ENCODE measurements at regions of chr7 and their contacts with region 1.

Region 1: DNA sequence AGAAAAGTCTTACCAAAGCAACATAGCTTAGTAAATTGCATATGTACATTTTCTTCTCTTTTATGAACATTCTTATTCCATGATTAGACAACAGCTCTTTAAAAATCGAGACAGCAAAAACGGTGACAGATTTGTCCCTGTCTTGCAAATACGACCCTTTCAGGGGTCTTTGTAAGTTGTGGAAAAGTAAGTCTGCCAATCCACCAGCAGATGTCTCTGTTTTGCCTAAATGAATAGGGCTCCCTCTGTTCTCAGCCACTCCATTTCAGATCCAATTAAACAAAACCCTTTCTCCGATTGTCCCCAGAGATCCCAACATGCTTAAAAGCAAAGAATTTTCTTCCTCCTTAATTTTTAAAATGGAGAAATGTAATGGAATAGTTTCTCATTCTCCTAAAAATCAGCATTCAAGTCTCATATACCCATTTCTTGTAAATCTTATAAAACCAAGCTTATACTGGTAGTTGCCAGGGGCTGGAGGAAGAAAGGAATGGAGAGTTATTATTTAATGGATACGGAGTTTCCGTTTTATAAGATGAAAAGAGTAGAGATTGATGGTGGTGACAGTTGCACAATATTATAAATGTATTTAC is 61.0 kb upstream of the NFE2L3 start:
- DNase-seq: peak; percentile 15
- H3K4me3 Mint-ChIP-seq: no peak overlapping the region
- H3K27ac Mint-ChIP-seq: no peak overlapping the region
- H3K4me1 Mint-ChIP-seq: peaks cover 19% of the 10 kb centered on the region
- H3K27me3 Mint-ChIP-seq: no peaks in the 10 kb centered on the region

Region 2: DNA sequence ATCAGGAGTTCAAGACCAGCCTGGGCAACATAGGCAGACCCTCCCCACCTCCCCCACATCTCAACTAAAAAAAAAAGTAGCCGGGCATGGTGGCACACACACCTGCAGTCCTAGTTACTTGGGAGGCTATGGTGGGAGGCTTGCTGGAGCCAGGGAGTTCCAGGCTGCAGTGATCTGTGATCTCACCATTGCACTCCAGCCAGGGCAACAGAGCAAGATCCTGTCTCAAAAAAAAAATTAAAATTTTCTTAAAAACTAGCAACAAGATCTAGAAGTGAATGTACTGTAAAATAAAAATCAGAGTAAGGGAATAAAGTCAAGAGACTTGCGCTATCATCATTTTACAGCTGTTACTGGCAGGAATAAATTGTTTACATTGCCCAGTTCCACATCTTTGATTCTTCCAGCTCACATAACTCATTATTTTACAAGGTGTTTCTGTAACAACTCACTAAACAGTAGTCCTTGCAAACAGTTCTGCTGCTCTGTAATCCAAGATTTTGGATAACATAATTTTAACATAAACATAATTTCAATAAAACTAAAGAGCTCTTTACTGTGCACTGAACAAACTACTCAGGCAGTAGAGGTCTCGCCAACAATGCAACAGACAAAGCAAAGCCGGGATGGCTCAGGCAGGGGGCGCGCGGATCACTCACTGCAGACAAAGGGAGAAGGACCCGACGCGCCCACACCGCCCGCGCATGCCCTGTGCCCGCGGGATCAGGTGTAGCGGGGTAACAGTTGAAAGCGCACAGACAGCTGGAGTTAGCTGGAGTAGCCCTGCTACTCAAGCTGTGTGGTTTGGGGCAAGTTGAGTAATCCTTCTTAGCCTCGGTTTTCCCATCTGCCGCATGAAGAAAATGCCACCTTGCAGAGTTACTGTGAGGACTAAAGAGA is 12.3 kb before region 1 on chr7:
- CTCF ChIA-PET with region 1: interaction called, 43 read pairs
- intact Hi-C with region 1: no loop called
- DNase-seq: peak; percentile 89
- H3K4me3 Mint-ChIP-seq: no peak overlapping the region
- H3K27ac Mint-ChIP-seq: no peak overlapping the region
- H3K4me1 Mint-ChIP-seq: peaks cover 3% of the 10 kb centered on the region
- H3K27me3 Mint-ChIP-seq: peaks cover 17% of the 10 kb centered on the region

Region 3: DNA sequence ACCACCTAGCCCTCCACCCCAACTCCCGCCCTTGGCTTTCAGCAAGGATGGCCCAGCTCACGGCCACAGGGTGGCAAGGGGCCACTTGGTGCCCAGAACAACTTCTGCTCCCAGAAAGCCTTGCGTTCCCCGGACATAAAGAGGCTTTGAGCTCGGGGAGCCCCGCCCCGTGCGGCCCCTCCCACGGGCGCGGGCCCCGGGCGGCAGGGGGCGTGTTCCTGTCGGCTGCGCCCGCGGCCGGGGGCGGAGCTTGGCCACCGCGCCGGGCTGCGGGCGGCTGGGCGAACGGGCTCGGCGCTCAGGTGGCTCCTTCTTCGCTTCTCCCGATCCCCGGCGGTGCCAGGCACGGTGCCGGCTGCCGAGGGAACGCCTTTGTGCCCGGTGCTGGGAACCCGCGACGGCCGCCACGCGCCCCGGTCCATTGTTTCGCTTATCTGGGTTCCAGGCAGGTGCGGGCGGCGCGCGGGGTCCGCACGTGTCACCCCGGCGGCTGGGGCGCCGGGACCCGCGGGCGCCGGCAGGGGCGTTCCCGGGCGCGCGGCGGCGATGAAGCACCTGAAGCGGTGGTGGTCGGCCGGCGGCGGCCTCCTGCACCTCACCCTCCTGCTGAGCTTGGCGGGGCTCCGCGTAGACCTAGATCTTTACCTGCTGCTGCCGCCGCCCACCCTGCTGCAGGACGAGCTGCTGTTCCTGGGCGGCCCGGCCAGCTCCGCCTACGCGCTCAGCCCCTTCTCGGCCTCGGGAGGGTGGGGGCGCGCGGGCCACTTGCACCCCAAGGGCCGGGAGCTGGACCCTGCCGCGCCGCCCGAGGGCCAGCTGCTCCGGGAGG is 61.1 kb after region 1 on chr7 and contains the start of gene NFE2L3:
- CTCF ChIA-PET with region 1: interaction called, 7 read pairs
- intact Hi-C with region 1: loop called (anchors 1 kb)
- DNase-seq: peak; percentile 86
- H3K4me3 Mint-ChIP-seq: peak within 1 kb of the TSS; percentile 95
- H3K27ac Mint-ChIP-seq: peak within 1 kb of the TSS; percentile 98
- H3K4me1 Mint-ChIP-seq: peaks cover 50% of the 10 kb centered on the region
- H3K27me3 Mint-ChIP-seq: no peaks in the 10 kb centered on the region
- total RNA-seq, gene NFE2L3: 12.5 to 12.9 TPM

Region 4: GRCh38 chr7:26187380-26188205 is 96.6 kb after region 1 on chr7:
- CTCF ChIA-PET with region 1: interaction called, 35 read pairs
- intact Hi-C with region 1: loop called (anchors 2 kb)
- DNase-seq: peak; percentile 47
- H3K4me3 Mint-ChIP-seq: no peak overlapping the region
- H3K27ac Mint-ChIP-seq: peak overlapping the region; percentile 85
- H3K4me1 Mint-ChIP-seq: peaks cover 75% of the 10 kb centered on the region
- H3K27me3 Mint-ChIP-seq: no peaks in the 10 kb centered on the region

Region 5: GRCh38 chr7:26284995-26285632 is 194.1 kb after region 1 on chr7:
- CTCF ChIA-PET with region 1: interaction called, 20 read pairs
- intact Hi-C with region 1: loop called (anchors 1 kb)
- DNase-seq: peak; percentile 38
- H3K4me3 Mint-ChIP-seq: no peak overlapping the region
- H3K27ac Mint-ChIP-seq: no peak overlapping the region
- H3K4me1 Mint-ChIP-seq: peaks cover 2% of the 10 kb centered on the region
- H3K27me3 Mint-ChIP-seq: no peaks in the 10 kb centered on the region

Region 6: DNA sequence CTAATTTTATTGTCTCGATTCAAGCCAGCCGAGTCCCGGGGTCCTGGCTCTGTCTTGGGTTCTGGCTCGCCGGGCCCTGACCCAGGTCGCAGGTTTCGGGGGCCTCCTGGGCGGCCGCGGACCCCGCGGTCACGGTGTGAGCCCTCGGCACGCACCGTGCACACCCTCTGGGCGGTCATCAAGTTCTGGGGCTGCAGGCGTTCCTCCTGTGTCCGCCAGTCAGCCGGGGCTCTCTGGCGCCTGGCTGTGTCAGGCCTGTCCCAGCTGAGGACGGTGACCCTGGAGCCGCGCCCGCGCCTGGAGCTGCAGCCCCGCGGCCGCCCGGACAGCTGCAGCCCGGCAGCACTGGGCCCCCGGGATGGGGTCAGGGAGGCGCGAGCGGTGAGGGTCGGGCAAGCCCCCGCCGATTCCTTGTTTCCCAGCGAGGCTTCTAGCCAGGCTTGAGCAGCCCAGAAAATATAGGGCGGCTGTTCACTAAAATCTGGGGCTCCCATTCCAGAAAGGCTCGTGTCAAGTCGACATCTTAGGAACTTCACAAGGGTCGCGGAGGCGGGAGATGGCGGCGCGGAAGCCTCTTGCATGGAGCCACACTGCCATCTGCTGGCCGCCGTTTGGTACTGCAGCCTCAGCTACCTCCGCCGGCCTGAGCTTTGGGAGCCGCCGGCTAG is 1069.7 kb after region 1 on chr7:
- CTCF ChIA-PET with region 1: no interaction called
- intact Hi-C with region 1: loop called (anchors 2 kb)
- DNase-seq: peak; percentile 87
- H3K4me3 Mint-ChIP-seq: peak overlapping the region; percentile 57
- H3K27ac Mint-ChIP-seq: no peak overlapping the region
- H3K4me1 Mint-ChIP-seq: peaks cover 35% of the 10 kb centered on the region
- H3K27me3 Mint-ChIP-seq: peaks cover 77% of the 10 kb centered on the region

Measured in activated naive CD4-positive, alpha-beta T cell treated with anti-CD3 and anti-CD28 coated beads for 36 hours (primary cell).